MCF 10A (cell line): ENCODE measurements at regions of chr17 and their contacts with region 1.

Region 1: GRCh38 chr17:10875979-10876555 is 38.2 kb upstream of the PIRT start:
- DNase-seq: peak; percentile 27
- H3K4me3 Mint-ChIP-seq: no peak overlapping the region
- H3K27ac Mint-ChIP-seq: no peak overlapping the region
- H3K4me1 Mint-ChIP-seq: peaks cover 9% of the 10 kb centered on the region
- H3K27me3 Mint-ChIP-seq: peaks cover 11% of the 10 kb centered on the region
- CTCF ChIP-seq: peak; percentile 75

Region 2: DNA sequence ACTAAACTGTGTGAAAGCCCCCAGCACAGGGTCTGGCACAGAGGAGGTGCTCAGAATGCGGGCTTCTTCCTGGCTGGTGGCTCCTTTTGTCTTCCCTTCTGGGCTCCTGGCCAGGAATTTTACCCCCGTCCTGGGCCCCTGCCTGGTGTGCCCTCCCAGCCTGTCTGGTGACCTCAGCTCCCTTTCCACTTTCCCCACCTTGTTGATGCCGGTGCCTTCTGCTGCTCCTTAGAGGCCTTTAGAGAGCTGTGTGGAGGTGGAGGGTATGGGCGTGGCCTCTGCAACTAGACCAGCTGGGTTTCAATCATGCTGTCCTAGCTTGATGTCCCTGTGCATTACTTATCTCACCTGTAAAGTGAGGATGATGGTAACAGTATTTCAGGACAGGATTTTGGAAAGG is 55.0 kb before region 1 on chr17:
- CTCF ChIA-PET with region 1: no interaction called
- POLR2A ChIA-PET with region 1: no interaction called
- intact Hi-C with region 1: no loop called
- DNase-seq: no peak
- H3K4me3 Mint-ChIP-seq: no peak overlapping the region
- H3K27ac Mint-ChIP-seq: no peak overlapping the region
- H3K4me1 Mint-ChIP-seq: no peaks in the 10 kb centered on the region
- H3K27me3 Mint-ChIP-seq: peaks cover 34% of the 10 kb centered on the region
- CTCF ChIP-seq: no peak

Region 3: DNA sequence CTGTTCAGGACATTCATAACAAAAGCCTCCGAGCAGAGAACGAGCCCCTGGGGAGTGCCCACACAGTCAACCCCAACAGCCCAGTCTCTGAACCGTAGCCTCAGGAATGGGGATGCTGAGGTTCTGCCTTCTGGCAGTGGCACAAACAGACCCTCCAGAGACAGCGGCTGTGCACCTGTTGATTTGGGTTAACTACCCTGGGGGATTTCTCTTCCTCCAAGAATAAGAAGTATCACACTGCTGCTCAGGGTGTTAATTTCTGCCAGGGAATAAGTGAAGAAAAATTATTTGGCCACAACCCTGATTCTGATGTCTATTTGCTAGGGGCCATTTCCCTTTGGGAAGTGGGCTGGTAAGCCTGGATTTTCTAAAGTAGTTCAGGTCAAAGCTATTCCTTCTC is 12.8 kb after region 1 on chr17:
- CTCF ChIA-PET with region 1: interaction called, 14 read pairs
- POLR2A ChIA-PET with region 1: no interaction called
- intact Hi-C with region 1: no loop called
- DNase-seq: no peak
- H3K4me3 Mint-ChIP-seq: no peak overlapping the region
- H3K27ac Mint-ChIP-seq: no peak overlapping the region
- H3K4me1 Mint-ChIP-seq: no peaks in the 10 kb centered on the region
- H3K27me3 Mint-ChIP-seq: peaks cover 11% of the 10 kb centered on the region
- CTCF ChIP-seq: no peak

Region 4: DNA sequence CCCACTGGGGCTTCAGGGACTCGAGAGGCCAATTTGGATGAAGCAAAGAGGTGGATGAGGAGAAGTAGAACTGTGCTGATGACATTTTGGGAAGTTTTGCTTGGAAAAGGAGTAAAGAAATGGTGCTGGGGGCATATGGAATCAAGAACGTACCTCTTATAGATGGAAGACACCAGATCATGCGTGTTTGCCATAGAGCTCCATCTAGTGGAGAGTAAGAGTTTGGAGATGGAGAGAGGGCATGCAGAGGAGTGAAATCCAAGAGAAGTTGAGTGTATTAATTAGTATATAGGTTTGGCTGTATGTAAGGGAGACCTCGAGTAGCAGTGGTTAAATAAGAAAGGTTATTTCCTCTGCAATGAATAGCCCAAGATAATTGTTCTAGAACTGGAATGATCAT is 420.9 kb after region 1 on chr17:
- CTCF ChIA-PET with region 1: no interaction called
- POLR2A ChIA-PET with region 1: no interaction called
- intact Hi-C with region 1: loop called (anchors 5 kb)
- DNase-seq: no peak
- H3K4me3 Mint-ChIP-seq: no peak overlapping the region
- H3K27ac Mint-ChIP-seq: no peak overlapping the region
- H3K4me1 Mint-ChIP-seq: no peaks in the 10 kb centered on the region
- H3K27me3 Mint-ChIP-seq: peaks cover 22% of the 10 kb centered on the region
- CTCF ChIP-seq: no peak

Region 5: GRCh38 chr17:11742886-11743285 is 866.8 kb after region 1 on chr17:
- CTCF ChIA-PET with region 1: interaction called, 7 read pairs
- POLR2A ChIA-PET with region 1: no interaction called
- intact Hi-C with region 1: loop called (anchors 5 kb)
- DNase-seq: no peak
- H3K4me3 Mint-ChIP-seq: no peak overlapping the region
- H3K27ac Mint-ChIP-seq: no peak overlapping the region
- H3K4me1 Mint-ChIP-seq: peaks cover 12% of the 10 kb centered on the region
- H3K27me3 Mint-ChIP-seq: no peaks in the 10 kb centered on the region
- CTCF ChIP-seq: no peak

Region 6: GRCh38 chr17:11935734-11936406 is 1059.8 kb after region 1 on chr17:
- CTCF ChIA-PET with region 1: interaction called, 51 read pairs
- POLR2A ChIA-PET with region 1: interaction called, 4 read pairs
- intact Hi-C with region 1: loop called (anchors 1 kb)
- DNase-seq: peak; percentile 79
- H3K4me3 Mint-ChIP-seq: no peak overlapping the region
- H3K27ac Mint-ChIP-seq: no peak overlapping the region
- H3K4me1 Mint-ChIP-seq: peaks cover 5% of the 10 kb centered on the region
- H3K27me3 Mint-ChIP-seq: no peaks in the 10 kb centered on the region
- CTCF ChIP-seq: peak; percentile 94

Region 7: DNA sequence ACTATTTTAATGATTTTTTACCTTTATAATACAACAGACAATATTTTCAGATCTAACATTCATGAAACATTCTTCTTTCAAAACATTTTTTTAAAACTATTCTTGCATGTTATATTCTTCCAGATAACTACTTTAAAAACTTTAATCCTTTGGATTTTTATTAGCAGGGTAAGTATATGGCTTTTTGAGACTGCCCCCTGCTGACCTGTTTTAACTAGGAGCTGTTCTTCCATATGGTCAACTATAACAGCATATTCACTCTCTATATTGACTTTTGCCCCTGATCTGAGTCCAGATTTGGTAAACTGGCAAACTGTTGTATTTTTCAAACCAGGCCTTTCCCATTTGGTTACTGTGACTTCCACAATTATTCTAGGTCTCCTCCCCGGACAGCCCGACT is 1104.7 kb after region 1 on chr17:
- CTCF ChIA-PET with region 1: interaction called, 66 read pairs
- POLR2A ChIA-PET with region 1: no interaction called
- intact Hi-C with region 1: no loop called
- DNase-seq: peak; percentile 38
- H3K4me3 Mint-ChIP-seq: no peak overlapping the region
- H3K27ac Mint-ChIP-seq: no peak overlapping the region
- H3K4me1 Mint-ChIP-seq: peaks cover 17% of the 10 kb centered on the region
- H3K27me3 Mint-ChIP-seq: no peaks in the 10 kb centered on the region
- CTCF ChIP-seq: peak; percentile 39